ENCODE measurements at regions of chr6 and their contacts with region 1.

Region 1: GRCh38 chr6:47535316-47536225 is 58.0 kb downstream of the CD2AP start:
- DNase-seq: no peak
- ATAC-seq: no peak
- H3K4me3 ChIP-seq: no peak overlapping the region
- H3K4me3 Mint-ChIP-seq: no peak overlapping the region
- H3K27ac ChIP-seq: no peak overlapping the region
- H3K27ac Mint-ChIP-seq: no peak overlapping the region
- H3K4me1 ChIP-seq: no peaks in the 10 kb centered on the region
- H3K4me1 Mint-ChIP-seq: no peaks in the 10 kb centered on the region
- H3K27me3 ChIP-seq: no peaks in the 10 kb centered on the region
- H3K27me3 Mint-ChIP-seq: no peaks in the 10 kb centered on the region
- CTCF ChIP-seq: no peak

Region 2: GRCh38 chr6:47495954-47496545 is 39.5 kb before region 1 on chr6:
- CTCF ChIA-PET with region 1: no interaction called
- POLR2A ChIA-PET with region 1: no interaction called
- intact Hi-C with region 1: loop called (anchors 5 kb)
- DNase-seq: no peak
- ATAC-seq: no peak
- H3K4me3 ChIP-seq: no peak overlapping the region
- H3K4me3 Mint-ChIP-seq: no peak overlapping the region
- H3K27ac ChIP-seq: no peak overlapping the region
- H3K27ac Mint-ChIP-seq: no peak overlapping the region
- H3K4me1 ChIP-seq: no peaks in the 10 kb centered on the region
- H3K4me1 Mint-ChIP-seq: peaks cover 61% of the 10 kb centered on the region
- H3K27me3 ChIP-seq: no peaks in the 10 kb centered on the region
- H3K27me3 Mint-ChIP-seq: no peaks in the 10 kb centered on the region
- CTCF ChIP-seq: no peak

Measured in B cell (primary cell).